Left lung (tissue), 14 donors: ENCODE measurements at regions of chr1 and their contacts with region 1.

Region 1: DNA sequence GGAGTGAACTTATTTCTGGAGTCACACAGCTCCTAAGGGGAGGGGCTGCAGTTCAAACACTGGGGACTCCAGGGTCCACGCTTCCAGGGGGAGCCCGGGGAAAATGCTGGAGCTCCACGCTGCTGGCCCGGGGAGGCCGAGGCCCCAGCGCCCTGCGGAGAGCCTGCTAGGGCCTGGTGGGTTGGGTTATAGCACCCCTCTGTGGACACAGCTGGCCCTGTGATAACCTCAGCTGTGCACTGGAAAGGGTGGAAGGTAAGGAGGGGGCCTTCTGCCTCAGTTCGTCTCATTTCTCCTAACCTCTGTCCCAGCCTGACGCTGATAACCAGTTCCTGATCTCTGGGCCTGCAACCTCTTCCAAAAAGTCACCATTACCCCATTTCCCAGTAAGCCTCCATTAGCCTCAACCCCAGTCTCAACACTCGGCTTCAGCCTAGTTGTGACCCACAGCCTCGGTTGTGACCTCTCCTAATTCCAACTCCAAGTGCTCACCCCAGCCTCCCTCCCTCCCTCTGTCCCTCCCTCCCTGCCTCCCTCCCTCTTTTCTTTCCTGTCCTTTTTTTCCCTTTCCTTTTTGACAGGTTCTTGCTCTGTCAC is 7.1 kb downstream of the NBL1 start:
- DNase-seq: peak in 2 of 4 donors; percentile 42 to 67
- ATAC-seq: peak; percentile 62
- H3K4me3 ChIP-seq: no peak overlapping the region
- H3K27ac ChIP-seq: peak overlapping the region; percentile 36 to 46
- H3K4me1 ChIP-seq: peaks cover 13 to 28% of the 10 kb centered on the region in 2 donors
- H3K27me3 ChIP-seq: peaks cover 0 to 14% of the 10 kb centered on the region in 2 donors
- CTCF ChIP-seq: peak; percentile 41 to 45

Region 2: GRCh38 chr1:19341201-19342072 is 309.8 kb before region 1 on chr1:
- intact Hi-C with region 1: loop called in 1 of 2 experiments (anchors 10 kb)
- DNase-seq: peak in 3 of 4 donors; percentile 48 to 64 (median 50)
- ATAC-seq: peak; percentile 75
- H3K4me3 ChIP-seq: no peak overlapping the region
- H3K27ac ChIP-seq: no peak overlapping the region
- H3K4me1 ChIP-seq: peaks cover 0 to 1% of the 10 kb centered on the region in 2 donors
- H3K27me3 ChIP-seq: no peaks in the 10 kb centered on the region
- CTCF ChIP-seq: peak; percentile 80 to 82

Region 3: GRCh38 chr1:19909392-19909791 is 258.2 kb after region 1 on chr1:
- intact Hi-C with region 1: no loop called
- DNase-seq: no peak
- ATAC-seq: no peak
- H3K4me3 ChIP-seq: no peak overlapping the region
- H3K27ac ChIP-seq: no peak overlapping the region
- H3K4me1 ChIP-seq: no peaks in the 10 kb centered on the region
- H3K27me3 ChIP-seq: no peaks in the 10 kb centered on the region
- CTCF ChIP-seq: no peak

Region 4: GRCh38 chr1:19942088-19942487 is 290.8 kb after region 1 on chr1:
- intact Hi-C with region 1: no loop called
- DNase-seq: no peak
- ATAC-seq: no peak
- H3K4me3 ChIP-seq: no peak overlapping the region
- H3K27ac ChIP-seq: no peak overlapping the region
- H3K4me1 ChIP-seq: no peaks in the 10 kb centered on the region
- H3K27me3 ChIP-seq: peaks cover 0 to 9% of the 10 kb centered on the region in 2 donors
- CTCF ChIP-seq: no peak